ENCODE measurements at regions of chr12 and their contacts with region 1.

Region 1: GRCh38 chr12:58425481-58426392 is 484.4 kb downstream of the ATP23 start:
- DNase-seq: peak; percentile 95
- H3K4me3 ChIP-seq: peak overlapping the region in 1 of 3 experiments; percentile 1
- H3K27ac ChIP-seq: peak overlapping the region; percentile 85
- H3K4me1 ChIP-seq: peaks cover 25% of the 10 kb centered on the region
- H3K27me3 ChIP-seq: no peaks in the 10 kb centered on the region
- CTCF ChIP-seq: no peak
- POLR2A ChIP-seq: no peak

Region 2: DNA sequence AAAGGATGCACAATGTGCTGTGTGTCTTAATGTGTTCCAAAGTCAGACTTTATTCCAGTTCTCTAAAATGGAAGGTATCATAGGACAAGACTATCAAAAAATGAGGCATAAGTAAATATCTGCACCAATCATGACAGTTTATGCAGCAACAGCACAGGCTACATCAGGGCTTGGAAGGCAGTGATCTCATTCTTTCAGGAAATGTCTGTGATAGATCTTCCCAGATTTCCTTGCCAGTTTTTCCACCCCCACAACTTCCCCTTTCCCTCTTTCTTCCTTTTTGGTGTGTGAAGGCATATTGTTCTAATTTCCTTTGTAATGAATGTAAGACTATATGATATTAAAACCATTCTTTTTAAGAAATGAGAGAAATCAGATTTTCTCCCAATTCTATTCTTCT is 157.7 kb before region 1 on chr12:
- CTCF ChIA-PET with region 1: no interaction called
- POLR2A ChIA-PET with region 1: no interaction called
- dilution Hi-C with region 1: no loop called
- intact Hi-C with region 1: loop called (anchors 5 kb)
- DNase-seq: peak; percentile 87
- H3K4me3 ChIP-seq: no peak overlapping the region
- H3K27ac ChIP-seq: peak overlapping the region; percentile 66
- H3K4me1 ChIP-seq: peaks cover 18% of the 10 kb centered on the region
- H3K27me3 ChIP-seq: no peaks in the 10 kb centered on the region
- CTCF ChIP-seq: no peak
- POLR2A ChIP-seq: peak; percentile 33

Measured in endothelial cell of umbilical vein (primary cell).